ENCODE measurements at regions of chr2 and their contacts with region 1.

Region 1: GRCh38 chr2:37414470-37414949 is 70.1 kb downstream of the QPCT start:
- DNase-seq: peak; percentile 71
- H3K4me3 ChIP-seq: no peak overlapping the region
- H3K27ac ChIP-seq: no peak overlapping the region
- H3K4me1 ChIP-seq: peaks cover 6% of the 10 kb centered on the region
- H3K27me3 ChIP-seq: no peaks in the 10 kb centered on the region
- CTCF ChIP-seq: peak; percentile 74 to 86
- POLR2A ChIP-seq: no peak

Region 2: GRCh38 chr2:37454851-37455762 is 40.6 kb after region 1 on chr2:
- CTCF ChIA-PET with region 1: interaction called, 21 read pairs
- POLR2A ChIA-PET with region 1: no interaction called
- dilution Hi-C with region 1: no loop called
- intact Hi-C with region 1: loop called (anchors 1 kb)
- DNase-seq: peak; percentile 95
- H3K4me3 ChIP-seq: no peak overlapping the region
- H3K27ac ChIP-seq: peak overlapping the region; percentile 99
- H3K4me1 ChIP-seq: peaks cover 67% of the 10 kb centered on the region
- H3K27me3 ChIP-seq: no peaks in the 10 kb centered on the region
- CTCF ChIP-seq: no peak
- POLR2A ChIP-seq: peak; percentile 9

Region 3: GRCh38 chr2:37573451-37574388 is 159.2 kb after region 1 on chr2:
- CTCF ChIA-PET with region 1: interaction called, 10 read pairs
- POLR2A ChIA-PET with region 1: no interaction called
- dilution Hi-C with region 1: no loop called
- intact Hi-C with region 1: no loop called
- DNase-seq: peak; percentile 31
- H3K4me3 ChIP-seq: no peak overlapping the region
- H3K27ac ChIP-seq: no peak overlapping the region
- H3K4me1 ChIP-seq: peaks cover 5% of the 10 kb centered on the region
- H3K27me3 ChIP-seq: no peaks in the 10 kb centered on the region
- CTCF ChIP-seq: no peak
- POLR2A ChIP-seq: no peak

Region 4: DNA sequence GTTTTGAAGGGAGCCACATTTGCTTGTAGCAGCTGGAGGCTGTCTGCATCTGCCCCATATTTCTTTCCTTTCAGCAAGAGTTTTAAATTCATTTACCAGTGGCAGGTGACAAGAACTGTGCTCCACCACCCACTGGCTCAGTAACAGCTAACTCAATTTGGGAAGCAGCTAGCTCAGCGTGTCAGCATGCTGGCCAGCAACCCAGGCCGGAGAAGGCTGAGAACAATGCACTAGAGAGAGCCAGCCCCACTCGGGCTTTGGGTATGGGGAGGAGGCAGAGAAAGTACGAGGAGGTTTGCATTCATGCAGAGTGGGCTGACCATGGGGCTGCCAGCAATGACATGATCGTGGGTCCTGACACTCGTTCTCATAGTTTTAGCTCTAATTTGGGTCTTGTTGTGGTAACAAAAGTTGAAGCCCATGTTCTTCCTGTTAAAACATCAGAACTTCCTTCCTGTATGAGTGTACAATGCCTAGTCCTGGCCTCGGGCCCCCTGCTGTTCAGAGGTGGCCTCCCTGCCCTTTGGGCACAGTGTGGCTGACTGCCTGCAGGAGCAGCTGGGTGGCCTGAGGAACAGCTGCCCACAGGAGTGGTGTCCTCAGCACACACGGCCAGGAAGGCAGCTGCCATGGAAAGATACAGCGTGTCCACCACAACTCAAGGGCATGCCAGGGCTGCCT is 234.0 kb after region 1 on chr2:
- CTCF ChIA-PET with region 1: interaction called, 28 read pairs
- POLR2A ChIA-PET with region 1: interaction called, 3 read pairs
- dilution Hi-C with region 1: no loop called
- intact Hi-C with region 1: no loop called
- DNase-seq: peak; percentile 80
- H3K4me3 ChIP-seq: no peak overlapping the region
- H3K27ac ChIP-seq: peak overlapping the region; percentile 68
- H3K4me1 ChIP-seq: peaks cover 80% of the 10 kb centered on the region
- H3K27me3 ChIP-seq: no peaks in the 10 kb centered on the region
- CTCF ChIP-seq: peak; percentile 33 to 41
- POLR2A ChIP-seq: no peak

Region 5: DNA sequence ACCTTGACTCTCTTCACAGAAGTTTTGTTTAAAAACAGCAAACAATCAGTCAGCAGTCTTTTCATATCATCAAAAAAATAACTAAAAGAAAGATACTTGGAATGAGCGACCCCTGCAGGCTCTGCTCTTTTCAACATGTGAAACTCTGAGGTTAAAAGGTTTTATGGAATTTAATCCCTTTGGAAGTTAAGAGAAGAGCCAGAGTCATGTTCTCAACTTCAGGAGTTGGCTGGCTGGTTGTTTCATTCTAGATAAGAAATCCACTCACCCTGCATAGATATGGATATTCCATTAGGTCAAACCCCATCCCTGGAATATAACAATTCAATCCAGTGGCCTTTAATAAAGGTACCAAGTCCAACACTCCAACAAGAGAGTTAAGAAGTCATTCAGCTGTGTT is 395.0 kb after region 1 on chr2:
- CTCF ChIA-PET with region 1: interaction called, 47 read pairs
- POLR2A ChIA-PET with region 1: no interaction called
- dilution Hi-C with region 1: no loop called
- intact Hi-C with region 1: loop called (anchors 1 kb)
- DNase-seq: peak; percentile 77
- H3K4me3 ChIP-seq: no peak overlapping the region
- H3K27ac ChIP-seq: no peak overlapping the region
- H3K4me1 ChIP-seq: peaks cover 13% of the 10 kb centered on the region
- H3K27me3 ChIP-seq: no peaks in the 10 kb centered on the region
- CTCF ChIP-seq: peak; percentile 42 to 45
- POLR2A ChIP-seq: no peak

Region 6: GRCh38 chr2:37871456-37872191 is 457.1 kb after region 1 on chr2:
- CTCF ChIA-PET with region 1: interaction called, 509 read pairs
- POLR2A ChIA-PET with region 1: no interaction called
- dilution Hi-C with region 1: loop called (anchors 25 kb)
- intact Hi-C with region 1: no loop called
- DNase-seq: peak; percentile 32
- H3K4me3 ChIP-seq: no peak overlapping the region
- H3K27ac ChIP-seq: no peak overlapping the region
- H3K4me1 ChIP-seq: peaks cover 9% of the 10 kb centered on the region
- H3K27me3 ChIP-seq: no peaks in the 10 kb centered on the region
- CTCF ChIP-seq: no peak
- POLR2A ChIP-seq: no peak